CD4-positive, alpha-beta T cell (primary cell): ENCODE measurements at regions of chrX and their contacts with region 1.

Region 1: DNA sequence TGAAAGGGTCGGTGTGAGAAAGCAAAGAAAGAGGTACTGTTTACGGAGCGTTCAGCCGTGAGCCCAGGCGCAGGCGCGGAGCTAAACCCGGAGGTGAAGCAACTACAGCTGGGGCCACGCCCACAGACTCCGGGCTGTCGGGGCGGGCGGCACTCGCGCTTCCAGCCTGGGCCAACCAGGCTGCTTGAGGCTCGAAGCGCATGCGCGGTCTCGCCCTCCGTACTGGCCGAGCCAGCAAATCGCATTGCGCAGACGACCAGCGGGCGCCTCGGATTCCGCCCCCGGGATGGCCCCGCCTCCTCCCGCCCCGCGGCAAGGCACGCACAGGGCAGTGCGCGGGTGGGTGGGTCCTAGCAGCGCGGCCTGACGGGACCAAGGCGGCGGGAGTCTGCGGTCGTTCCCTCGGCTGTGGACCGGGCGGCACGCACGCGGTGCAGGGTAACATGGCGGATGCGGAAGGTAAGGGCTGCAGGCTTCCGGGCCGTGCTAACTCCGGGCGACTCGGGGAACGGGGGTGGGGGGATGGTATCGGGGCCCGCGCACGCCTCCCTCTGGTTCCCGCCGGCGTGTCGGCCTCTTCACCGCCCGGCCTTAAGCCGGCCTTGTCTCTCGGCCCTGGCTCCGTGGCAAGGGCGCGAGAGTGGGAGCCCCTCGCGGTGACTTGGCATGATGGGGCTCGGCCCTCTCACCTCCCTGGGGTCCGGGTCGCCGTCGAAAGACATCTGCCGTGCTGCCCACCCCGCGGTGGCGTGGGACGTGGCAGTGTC is at the start of gene DKC1:
- DNase-seq: peak; percentile 86 to 98 (median 94)
- ATAC-seq: peak; percentile 87
- H3K4me3 ChIP-seq: peak within 1 kb of the TSS; percentile 80
- H3K4me3 Mint-ChIP-seq: peak within 1 kb of the TSS; percentile 91
- H3K27ac ChIP-seq: peak within 1 kb of the TSS; percentile 55 to 57
- H3K27ac Mint-ChIP-seq: peak within 1 kb of the TSS; percentile 95
- H3K4me1 ChIP-seq: peaks cover 25% of the 10 kb centered on the region
- H3K4me1 Mint-ChIP-seq: peaks cover 23% of the 10 kb centered on the region
- H3K27me3 ChIP-seq: no peaks in the 10 kb centered on the region
- H3K27me3 Mint-ChIP-seq: no peaks in the 10 kb centered on the region
- CTCF ChIP-seq: no peak
- total RNA-seq, gene DKC1: 51.7 to 58.6 TPM

Region 2: GRCh38 chrX:154698630-154699248 is 64.0 kb before region 1 on chrX:
- CTCF ChIA-PET with region 1: no interaction called
- POLR2A ChIA-PET with region 1: no interaction called
- intact Hi-C with region 1: no loop called
- DNase-seq: no peak
- ATAC-seq: no peak
- H3K4me3 ChIP-seq: no peak overlapping the region
- H3K4me3 Mint-ChIP-seq: no peak overlapping the region
- H3K27ac ChIP-seq: no peak overlapping the region
- H3K27ac Mint-ChIP-seq: no peak overlapping the region
- H3K4me1 ChIP-seq: no peaks in the 10 kb centered on the region
- H3K4me1 Mint-ChIP-seq: no peaks in the 10 kb centered on the region
- H3K27me3 ChIP-seq: no peaks in the 10 kb centered on the region
- H3K27me3 Mint-ChIP-seq: no peaks in the 10 kb centered on the region
- CTCF ChIP-seq: no peak

Region 3: GRCh38 chrX:154714925-154715324 is 47.8 kb before region 1 on chrX:
- CTCF ChIA-PET with region 1: no interaction called
- POLR2A ChIA-PET with region 1: interaction called, 4 read pairs
- intact Hi-C with region 1: loop called in 1 of 2 experiments (anchors 1 kb)
- DNase-seq: peak in 8 of 14 experiments; percentile 11 to 77 (median 55)
- ATAC-seq: peak; percentile 35
- H3K4me3 ChIP-seq: no peak overlapping the region
- H3K4me3 Mint-ChIP-seq: peak overlapping the region; percentile 1
- H3K27ac ChIP-seq: no peak overlapping the region
- H3K27ac Mint-ChIP-seq: peak overlapping the region; percentile 30
- H3K4me1 ChIP-seq: peaks cover 52% of the 10 kb centered on the region
- H3K4me1 Mint-ChIP-seq: peaks cover 62% of the 10 kb centered on the region
- H3K27me3 ChIP-seq: no peaks in the 10 kb centered on the region
- H3K27me3 Mint-ChIP-seq: no peaks in the 10 kb centered on the region
- CTCF ChIP-seq: peak; percentile 66

Region 4: DNA sequence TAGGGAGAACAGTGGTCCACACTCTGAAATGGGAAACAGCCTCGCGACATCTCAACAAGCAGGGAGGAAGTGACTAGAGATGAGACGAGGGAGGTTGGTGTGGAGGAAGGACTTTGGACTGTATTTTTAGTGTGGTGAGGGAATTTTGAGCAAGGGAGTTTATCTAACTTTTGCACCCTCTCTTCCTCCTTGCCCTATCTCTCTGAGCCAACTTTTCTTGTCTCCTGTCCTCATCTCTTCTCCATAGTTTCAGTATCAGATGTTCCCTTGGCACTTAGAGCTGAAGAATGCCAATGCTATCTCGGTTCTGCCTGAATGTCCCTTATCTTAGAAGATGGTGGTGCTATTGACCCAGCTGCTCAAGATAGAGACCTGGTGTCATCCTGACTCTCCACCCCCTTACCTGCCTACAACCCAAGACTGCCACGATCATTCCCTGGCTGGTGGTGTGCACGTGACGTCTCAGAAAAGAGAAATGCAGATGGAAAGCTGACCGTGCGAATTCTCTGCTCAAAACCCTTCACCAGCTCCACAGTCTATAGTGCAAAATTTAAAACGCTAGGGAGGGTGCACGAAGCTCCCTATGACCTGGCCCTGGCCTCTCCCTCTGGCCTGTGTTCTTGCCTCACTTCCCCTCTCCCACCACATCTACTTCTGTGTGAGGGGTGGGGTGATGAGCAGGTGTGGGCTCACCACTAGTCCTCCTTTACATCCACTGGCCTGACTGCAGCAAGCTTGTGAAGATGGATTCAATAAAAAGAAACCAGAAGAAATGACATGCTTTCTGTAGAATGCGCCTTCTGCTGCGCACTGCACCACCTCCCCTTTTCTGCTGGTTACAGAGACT is 21.7 kb after region 1 on chrX:
- CTCF ChIA-PET with region 1: no interaction called
- POLR2A ChIA-PET with region 1: no interaction called
- intact Hi-C with region 1: no loop called
- DNase-seq: no peak
- ATAC-seq: no peak
- H3K4me3 ChIP-seq: peak overlapping the region; percentile 36
- H3K4me3 Mint-ChIP-seq: peak overlapping the region; percentile 89
- H3K27ac ChIP-seq: no peak overlapping the region
- H3K27ac Mint-ChIP-seq: peak overlapping the region; percentile 84
- H3K4me1 ChIP-seq: peaks cover 7% of the 10 kb centered on the region
- H3K4me1 Mint-ChIP-seq: peaks cover 19% of the 10 kb centered on the region
- H3K27me3 ChIP-seq: no peaks in the 10 kb centered on the region
- H3K27me3 Mint-ChIP-seq: no peaks in the 10 kb centered on the region
- CTCF ChIP-seq: no peak

Region 5: DNA sequence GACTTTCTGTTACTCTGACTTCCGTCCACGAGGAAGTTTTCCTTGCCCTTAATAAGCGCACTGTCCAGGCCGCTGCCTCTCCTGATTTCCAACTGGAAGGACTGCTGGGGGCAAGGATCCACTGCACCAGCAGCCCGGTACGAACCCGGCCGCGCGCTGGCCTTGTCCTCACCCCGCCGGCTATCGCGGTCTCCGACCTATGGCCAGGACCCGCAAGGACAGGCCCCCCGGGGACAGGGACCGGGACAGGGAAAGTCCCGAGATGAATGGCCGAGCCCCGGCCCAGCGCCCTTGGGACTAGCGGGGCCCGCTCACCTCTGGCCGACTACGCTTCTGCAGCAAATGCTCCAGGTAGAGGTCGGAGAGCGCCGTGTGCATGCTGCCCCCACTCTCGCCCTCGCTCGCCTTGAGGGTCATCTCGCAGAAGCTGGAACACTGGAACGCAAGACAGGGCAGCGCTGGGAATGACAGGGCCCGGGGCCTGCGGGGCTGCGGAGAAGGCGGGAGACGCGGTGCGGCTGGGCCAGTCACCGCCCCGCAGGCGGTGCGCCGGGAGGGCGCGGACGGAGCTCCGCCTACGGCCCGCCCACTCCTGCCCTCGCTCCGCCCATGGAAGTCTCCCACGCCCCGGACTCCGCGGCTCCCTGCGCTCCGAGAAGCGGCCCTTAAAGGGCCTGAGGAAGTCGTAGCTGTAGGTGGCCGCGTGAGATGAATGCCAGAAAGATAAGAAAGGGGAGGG is 42.4 kb after region 1 on chrX and contains the start of gene MPP1:
- CTCF ChIA-PET with region 1: no interaction called
- POLR2A ChIA-PET with region 1: interaction called, 17 read pairs
- intact Hi-C with region 1: loop called in 1 of 2 experiments (anchors 2 kb)
- DNase-seq: peak; percentile 50 to 88 (median 68)
- ATAC-seq: peak; percentile 98
- H3K4me3 ChIP-seq: peak within 1 kb of the TSS; percentile 80
- H3K4me3 Mint-ChIP-seq: peak within 1 kb of the TSS; percentile 88
- H3K27ac ChIP-seq: no peak within 1 kb of the TSS
- H3K27ac Mint-ChIP-seq: peak within 1 kb of the TSS; percentile 40
- H3K4me1 ChIP-seq: peaks cover 36% of the 10 kb centered on the region
- H3K4me1 Mint-ChIP-seq: peaks cover 45% of the 10 kb centered on the region
- H3K27me3 ChIP-seq: no peaks in the 10 kb centered on the region
- H3K27me3 Mint-ChIP-seq: no peaks in the 10 kb centered on the region
- CTCF ChIP-seq: no peak
- total RNA-seq, gene MPP1: 10.7 to 13.1 TPM

Region 6: DNA sequence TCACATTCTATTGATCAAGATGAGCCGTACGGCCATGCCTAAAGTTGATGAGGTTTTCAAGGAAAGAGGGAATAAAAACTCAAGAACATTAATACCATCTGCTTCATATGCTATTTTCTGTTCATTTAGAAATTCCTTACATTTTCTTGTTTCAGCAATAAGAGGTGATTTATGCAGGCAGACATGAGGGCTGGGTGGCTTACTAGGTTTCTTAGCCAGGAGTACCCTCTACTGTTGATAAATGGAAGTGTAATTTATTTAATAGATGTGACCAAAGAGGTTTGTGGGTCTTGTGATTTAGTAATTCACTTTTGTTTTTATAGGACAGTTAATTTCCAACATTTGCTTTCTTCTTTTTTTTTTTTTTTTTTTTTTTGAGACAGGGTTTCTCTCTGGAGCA is 78.2 kb after region 1 on chrX:
- CTCF ChIA-PET with region 1: no interaction called
- POLR2A ChIA-PET with region 1: no interaction called
- intact Hi-C with region 1: loop called in 1 of 2 experiments (anchors 2 kb)
- DNase-seq: peak in 5 of 14 experiments; percentile 1 to 66 (median 58)
- ATAC-seq: peak; percentile 68
- H3K4me3 ChIP-seq: no peak overlapping the region
- H3K4me3 Mint-ChIP-seq: no peak overlapping the region
- H3K27ac ChIP-seq: no peak overlapping the region
- H3K27ac Mint-ChIP-seq: no peak overlapping the region
- H3K4me1 ChIP-seq: no peaks in the 10 kb centered on the region
- H3K4me1 Mint-ChIP-seq: no peaks in the 10 kb centered on the region
- H3K27me3 ChIP-seq: no peaks in the 10 kb centered on the region
- H3K27me3 Mint-ChIP-seq: no peaks in the 10 kb centered on the region
- CTCF ChIP-seq: peak; percentile 65